ENCODE measurements at regions of chr12 and their contacts with region 1.

Region 1: DNA sequence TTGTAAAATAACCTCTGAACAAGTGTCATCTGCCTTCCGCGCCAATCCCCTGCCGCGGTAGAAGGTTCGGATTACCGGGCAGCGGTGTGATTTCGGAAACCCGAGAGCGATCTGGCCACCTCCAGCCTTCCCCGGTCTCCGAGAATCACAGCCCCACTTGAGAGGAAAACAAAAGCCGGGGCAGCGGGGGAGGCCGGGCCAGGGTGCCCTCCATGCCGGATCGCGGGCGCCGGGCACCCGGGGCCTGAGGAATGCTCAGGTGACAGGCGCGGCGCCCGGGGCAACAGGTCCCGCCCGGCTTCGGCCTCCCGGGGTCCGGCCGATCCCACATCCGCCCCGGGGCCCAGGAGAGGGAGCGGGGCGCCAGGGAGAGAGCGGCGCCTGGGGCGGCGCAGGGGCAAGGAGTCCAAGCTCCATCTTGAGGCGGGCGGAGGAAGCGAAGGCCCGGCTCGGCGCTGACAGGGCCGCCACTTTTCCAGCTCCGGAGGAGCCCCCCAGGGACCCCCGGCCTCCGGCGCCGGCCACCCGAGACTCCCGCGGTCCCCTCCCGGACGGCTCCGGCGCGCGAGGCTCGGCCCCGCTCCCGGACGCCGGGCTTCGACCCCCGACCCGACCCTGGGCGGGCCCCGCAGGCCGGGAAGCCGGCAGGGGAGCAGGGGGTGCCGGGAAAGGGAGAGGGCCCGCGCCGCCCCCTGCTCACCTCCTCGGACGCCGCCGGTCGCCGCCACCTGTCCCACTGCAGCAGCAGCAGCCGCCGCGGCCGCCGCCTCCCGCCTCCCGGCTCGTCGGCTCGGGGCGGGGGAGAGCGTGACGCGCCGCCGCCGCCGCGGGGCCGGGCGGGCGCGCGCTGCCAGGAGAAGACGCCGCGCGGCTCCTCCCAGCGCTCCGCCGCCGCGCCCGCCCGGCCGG is at the start of gene CLIP1:
- DNase-seq: peak; percentile 34 to 86 (median 50)
- ATAC-seq: peak; percentile 76
- H3K4me3 ChIP-seq: peak within 1 kb of the TSS; percentile 85
- H3K4me3 Mint-ChIP-seq: peak within 1 kb of the TSS; percentile 96
- H3K27ac ChIP-seq: peak within 1 kb of the TSS; percentile 50 to 62
- H3K27ac Mint-ChIP-seq: peak within 1 kb of the TSS; percentile 86
- H3K4me1 ChIP-seq: peaks cover 32% of the 10 kb centered on the region
- H3K4me1 Mint-ChIP-seq: peaks cover 36% of the 10 kb centered on the region
- H3K27me3 ChIP-seq: no peaks in the 10 kb centered on the region
- H3K27me3 Mint-ChIP-seq: no peaks in the 10 kb centered on the region
- CTCF ChIP-seq: peak; percentile 55
- total RNA-seq, gene CLIP1: 52.0 to 54.9 TPM

Region 2: DNA sequence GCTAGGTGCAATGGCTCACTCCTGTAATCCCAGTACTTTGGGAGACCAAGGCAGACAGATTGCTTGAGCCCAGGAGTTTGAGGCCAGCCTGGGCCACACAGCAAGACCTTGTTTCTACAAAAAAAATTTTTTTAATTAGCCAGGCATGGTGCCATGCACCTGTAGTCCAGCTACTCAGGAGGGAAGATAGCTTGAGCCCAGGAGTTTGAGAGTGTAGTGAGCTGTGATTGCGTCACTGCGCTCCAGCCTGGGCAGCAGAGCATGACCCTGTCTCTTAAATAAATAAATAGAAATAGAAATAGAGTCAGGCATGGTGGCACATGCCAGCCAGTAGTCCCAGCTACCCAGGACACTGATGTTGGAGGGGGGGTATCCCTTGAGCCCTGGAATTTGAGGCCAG is 37.1 kb after region 1 on chr12:
- CTCF ChIA-PET with region 1: interaction called, 4 read pairs
- POLR2A ChIA-PET with region 1: no interaction called
- intact Hi-C with region 1: loop called in 1 of 2 experiments (anchors 5 kb)
- DNase-seq: no peak
- ATAC-seq: no peak
- H3K4me3 ChIP-seq: no peak overlapping the region
- H3K4me3 Mint-ChIP-seq: no peak overlapping the region
- H3K27ac ChIP-seq: no peak overlapping the region
- H3K27ac Mint-ChIP-seq: no peak overlapping the region
- H3K4me1 ChIP-seq: peaks cover 10% of the 10 kb centered on the region
- H3K4me1 Mint-ChIP-seq: peaks cover 8% of the 10 kb centered on the region
- H3K27me3 ChIP-seq: no peaks in the 10 kb centered on the region
- H3K27me3 Mint-ChIP-seq: no peaks in the 10 kb centered on the region
- CTCF ChIP-seq: no peak

Region 3: DNA sequence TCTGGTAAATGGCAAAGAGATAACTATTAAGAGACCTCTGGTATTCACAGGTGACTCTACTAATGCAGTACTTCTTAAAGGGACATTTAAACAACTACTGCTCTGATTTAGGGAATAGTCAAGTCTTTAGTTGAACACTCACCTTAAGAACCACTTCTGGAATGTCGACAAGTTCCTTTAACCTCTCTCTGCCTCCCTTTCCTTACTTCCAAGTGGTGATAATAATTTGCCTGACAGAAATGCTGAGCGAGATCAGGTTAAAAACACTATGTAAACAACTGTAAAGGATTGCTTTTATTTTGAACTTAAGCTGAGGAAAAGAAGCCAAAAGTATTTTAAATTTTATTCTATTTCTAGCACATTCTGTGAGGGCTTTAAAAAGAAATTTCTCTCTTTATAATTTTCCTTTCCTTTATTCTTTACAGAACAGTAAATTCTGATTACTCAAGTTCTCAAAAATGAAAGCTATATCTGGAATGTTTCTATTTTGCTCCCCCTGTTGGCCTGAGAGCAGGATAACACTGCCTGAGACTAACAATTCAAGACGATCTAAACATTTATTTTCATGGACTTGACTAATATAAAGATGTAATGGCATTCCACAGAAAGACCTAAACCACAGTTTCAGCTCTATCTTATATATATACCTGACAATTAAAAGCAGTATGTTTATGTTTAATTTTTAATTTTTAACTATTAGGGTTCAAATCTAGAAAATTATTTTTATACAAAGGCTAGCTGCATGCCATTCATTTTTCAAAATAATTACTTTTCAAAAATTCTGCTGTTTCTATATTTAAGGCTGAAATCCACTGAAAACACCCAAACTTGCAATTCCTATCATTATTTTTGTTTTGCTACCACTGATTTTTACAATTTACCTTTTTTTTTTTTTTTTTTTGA is 49.5 kb after region 1 on chr12:
- CTCF ChIA-PET with region 1: interaction called, 8 read pairs
- POLR2A ChIA-PET with region 1: interaction called, 14 read pairs
- intact Hi-C with region 1: loop called in 1 of 2 experiments (anchors 5 kb)
- DNase-seq: peak in 5 of 14 experiments; percentile 4 to 81 (median 73)
- ATAC-seq: peak; percentile 85
- H3K4me3 ChIP-seq: no peak overlapping the region
- H3K4me3 Mint-ChIP-seq: no peak overlapping the region
- H3K27ac ChIP-seq: no peak overlapping the region
- H3K27ac Mint-ChIP-seq: peak overlapping the region; percentile 2
- H3K4me1 ChIP-seq: no peaks in the 10 kb centered on the region
- H3K4me1 Mint-ChIP-seq: peaks cover 9% of the 10 kb centered on the region
- H3K27me3 ChIP-seq: no peaks in the 10 kb centered on the region
- H3K27me3 Mint-ChIP-seq: no peaks in the 10 kb centered on the region
- CTCF ChIP-seq: peak; percentile 91

Region 4: GRCh38 chr12:124213666-124214347 is 1791.7 kb after region 1 on chr12:
- CTCF ChIA-PET with region 1: no interaction called
- POLR2A ChIA-PET with region 1: no interaction called
- intact Hi-C with region 1: no loop called
- DNase-seq: no peak
- ATAC-seq: no peak
- H3K4me3 ChIP-seq: no peak overlapping the region
- H3K4me3 Mint-ChIP-seq: no peak overlapping the region
- H3K27ac ChIP-seq: no peak overlapping the region
- H3K27ac Mint-ChIP-seq: no peak overlapping the region
- H3K4me1 ChIP-seq: no peaks in the 10 kb centered on the region
- H3K4me1 Mint-ChIP-seq: no peaks in the 10 kb centered on the region
- H3K27me3 ChIP-seq: peaks cover 0 to 4% of the 10 kb centered on the region in 2 experiments
- H3K27me3 Mint-ChIP-seq: peaks cover 4% of the 10 kb centered on the region
- CTCF ChIP-seq: no peak

Measured in CD4-positive, alpha-beta T cell (primary cell).